SK-N-SH (cell line): ENCODE measurements at regions of chr13 and their contacts with region 1.

Region 1: GRCh38 chr13:75694722-75695121 is 58.6 kb downstream of the LMO7 start:
- DNase-seq: no peak
- H3K4me3 ChIP-seq: no peak overlapping the region
- H3K27ac ChIP-seq: peak overlapping the region in 1 of 2 experiments; percentile 30; a peak in 1 of 4 replicates
- H3K4me1 ChIP-seq: peaks cover 9 to 10% of the 10 kb centered on the region in 2 experiments; a peak in 3 of 4 replicates
- H3K27me3 ChIP-seq: no peaks in the 10 kb centered on the region
- CTCF ChIP-seq: no peak
- EP300 ChIP-seq: no peak
- RAD21 ChIP-seq: no peak

Region 2: GRCh38 chr13:75669706-75670105 is 25.0 kb before region 1 on chr13:
- CTCF ChIA-PET with region 1: interaction called, 14 read pairs
- POLR2A ChIA-PET with region 1: no interaction called
- DNase-seq: no peak
- H3K4me3 ChIP-seq: no peak overlapping the region
- H3K27ac ChIP-seq: peak overlapping the region in 1 of 2 experiments; percentile 41; a peak in 3 of 4 replicates
- H3K4me1 ChIP-seq: peaks cover 3 to 20% of the 10 kb centered on the region in 2 experiments; a peak in 3 of 4 replicates
- H3K27me3 ChIP-seq: no peaks in the 10 kb centered on the region
- CTCF ChIP-seq: no peak
- EP300 ChIP-seq: no peak
- RAD21 ChIP-seq: no peak

Region 3: GRCh38 chr13:75725736-75726135 is 31.0 kb after region 1 on chr13:
- CTCF ChIA-PET with region 1: interaction called, 10 read pairs
- POLR2A ChIA-PET with region 1: no interaction called
- DNase-seq: no peak
- H3K4me3 ChIP-seq: no peak overlapping the region
- H3K27ac ChIP-seq: peak overlapping the region in 1 of 2 experiments; percentile 35; a peak in 2 of 4 replicates
- H3K4me1 ChIP-seq: peaks cover 0 to 28% of the 10 kb centered on the region in 2 experiments; a peak in 2 of 4 replicates
- H3K27me3 ChIP-seq: no peaks in the 10 kb centered on the region
- CTCF ChIP-seq: no peak
- EP300 ChIP-seq: no peak
- RAD21 ChIP-seq: no peak

Region 4: DNA sequence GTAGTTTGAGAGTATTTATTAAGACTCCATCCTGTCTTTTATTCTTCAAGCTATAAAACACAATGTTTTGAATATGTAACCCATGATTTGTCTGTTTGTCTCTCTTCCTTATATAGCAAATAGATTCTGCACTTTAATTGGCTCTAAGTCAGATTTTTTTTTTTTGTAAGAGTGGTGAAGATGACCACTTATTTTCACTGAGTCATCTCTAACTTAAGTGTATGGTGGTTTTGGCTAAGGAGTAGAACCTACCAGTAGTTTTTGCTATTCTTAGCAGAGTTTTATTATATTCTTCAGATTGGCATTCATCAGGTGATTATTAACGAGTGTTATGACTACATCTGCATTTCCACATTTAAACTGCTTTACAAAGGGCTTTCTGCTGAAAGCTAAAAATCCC is 136.1 kb after region 1 on chr13:
- CTCF ChIA-PET with region 1: interaction called, 10 read pairs
- POLR2A ChIA-PET with region 1: no interaction called
- DNase-seq: no peak
- H3K4me3 ChIP-seq: no peak overlapping the region
- H3K27ac ChIP-seq: peak overlapping the region in 1 of 2 experiments; percentile 58; a peak in 2 of 4 replicates
- H3K4me1 ChIP-seq: no peaks in the 10 kb centered on the region
- H3K27me3 ChIP-seq: no peaks in the 10 kb centered on the region
- CTCF ChIP-seq: no peak
- EP300 ChIP-seq: no peak
- RAD21 ChIP-seq: no peak

Region 5: GRCh38 chr13:75876360-75877050 is 181.8 kb after region 1 on chr13:
- CTCF ChIA-PET with region 1: interaction called, 73 read pairs
- POLR2A ChIA-PET with region 1: no interaction called
- DNase-seq: peak; percentile 55
- H3K4me3 ChIP-seq: peak overlapping the region in 1 of 2 experiments; percentile 17; a peak in 1 of 4 replicates
- H3K27ac ChIP-seq: no peak overlapping the region
- H3K4me1 ChIP-seq: peaks cover 0 to 2% of the 10 kb centered on the region in 2 experiments; a peak in 2 of 4 replicates
- H3K27me3 ChIP-seq: no peaks in the 10 kb centered on the region
- CTCF ChIP-seq: peak; percentile 91
- EP300 ChIP-seq: no peak
- RAD21 ChIP-seq: peak; percentile 95

Region 6: GRCh38 chr13:76903544-76904162 is 1208.9 kb after region 1 on chr13:
- CTCF ChIA-PET with region 1: interaction called, 39 read pairs
- POLR2A ChIA-PET with region 1: no interaction called
- DNase-seq: peak; percentile 73
- H3K4me3 ChIP-seq: no peak overlapping the region
- H3K27ac ChIP-seq: no peak overlapping the region
- H3K4me1 ChIP-seq: no peaks in the 10 kb centered on the region; a peak in 2 of 4 replicates
- H3K27me3 ChIP-seq: peaks cover 5% of the 10 kb centered on the region; the same call in 1 of the 2 replicates
- CTCF ChIP-seq: peak; percentile 99
- EP300 ChIP-seq: no peak
- RAD21 ChIP-seq: peak; percentile 99